Common myeloid progenitor, CD34-positive (primary cell): ENCODE measurements at regions of chr19 and their contacts with region 1.

Region 1: DNA sequence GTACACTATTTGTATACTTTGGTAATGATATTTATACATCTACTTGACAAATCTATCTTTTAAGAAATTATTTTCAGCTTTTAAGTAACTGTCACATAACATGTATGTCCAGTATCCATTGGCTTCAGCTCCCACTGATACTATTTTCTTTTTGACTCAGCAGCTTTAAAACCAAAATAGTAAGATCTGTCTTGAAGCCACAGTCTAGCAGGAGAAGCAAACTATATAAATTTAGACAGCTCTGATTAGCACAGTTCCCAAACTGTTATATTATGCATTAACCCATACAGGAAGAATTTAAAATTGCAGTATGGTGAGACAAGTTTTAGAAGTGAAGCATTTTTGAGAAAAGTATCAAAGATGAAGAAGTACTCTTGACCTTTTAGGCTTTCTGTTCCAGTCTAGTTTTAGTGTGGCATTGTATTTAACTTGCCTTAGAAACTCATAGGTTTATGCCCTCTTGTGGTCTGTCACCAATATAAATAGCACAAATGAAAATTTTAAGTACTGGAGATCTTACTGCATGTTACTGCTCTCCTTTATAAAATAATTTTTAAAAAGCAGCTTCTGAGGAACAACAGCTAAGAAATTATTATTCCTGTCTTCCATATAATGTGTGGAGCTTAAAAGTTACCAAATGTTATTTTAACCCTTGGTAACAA is 24.7 kb downstream of the URI1 start:
- DNase-seq: peak; percentile 52 to 72 (median 65)
- H3K4me3 ChIP-seq: no peak overlapping the region
- H3K27ac ChIP-seq: peak overlapping the region; percentile 10 to 67
- H3K4me1 ChIP-seq: peaks cover 10 to 45% (median 26%) of the 10 kb centered on the region in 4 experiments
- H3K27me3 ChIP-seq: no peaks in the 10 kb centered on the region

Region 2: GRCh38 chr19:29978080-29978479 is 11.4 kb after region 1 on chr19:
- CTCF ChIA-PET with region 1: interaction called, 14 read pairs
- POLR2A ChIA-PET with region 1: no interaction called
- DNase-seq: peak; percentile 14 to 45 (median 28)
- H3K4me3 ChIP-seq: peak overlapping the region in 5 of 7 experiments; percentile 19 to 73 (median 45)
- H3K27ac ChIP-seq: peak overlapping the region; percentile 33 to 76
- H3K4me1 ChIP-seq: peaks cover 4 to 20% (median 12%) of the 10 kb centered on the region in 4 experiments
- H3K27me3 ChIP-seq: no peaks in the 10 kb centered on the region

Region 3: DNA sequence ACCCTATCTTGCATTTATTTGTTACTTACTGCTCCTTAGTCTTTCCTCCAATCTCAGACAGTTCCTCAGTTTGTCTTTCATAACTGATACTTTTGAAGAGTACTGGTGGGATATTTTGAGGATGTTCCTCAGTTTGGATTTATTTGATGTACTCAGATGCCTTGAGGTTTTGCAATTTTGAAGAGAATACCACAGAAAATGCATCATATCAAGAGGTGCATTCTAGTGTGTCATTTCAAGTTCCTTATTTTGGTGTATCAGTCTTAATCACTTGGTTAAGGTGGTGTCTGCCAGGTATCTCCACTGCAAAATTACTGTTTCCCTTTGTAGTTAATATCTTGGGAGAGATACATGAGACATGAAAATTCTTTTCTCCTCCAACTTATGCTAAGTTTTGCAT is 50.5 kb after region 1 on chr19:
- CTCF ChIA-PET with region 1: no interaction called
- POLR2A ChIA-PET with region 1: no interaction called
- DNase-seq: no peak
- H3K4me3 ChIP-seq: no peak overlapping the region
- H3K27ac ChIP-seq: no peak overlapping the region
- H3K4me1 ChIP-seq: no peaks in the 10 kb centered on the region
- H3K27me3 ChIP-seq: no peaks in the 10 kb centered on the region

Region 4: GRCh38 chr19:30269638-30270037 is 302.9 kb after region 1 on chr19:
- CTCF ChIA-PET with region 1: no interaction called
- POLR2A ChIA-PET with region 1: no interaction called
- DNase-seq: no peak
- H3K4me3 ChIP-seq: no peak overlapping the region
- H3K27ac ChIP-seq: no peak overlapping the region
- H3K4me1 ChIP-seq: no peaks in the 10 kb centered on the region
- H3K27me3 ChIP-seq: peaks cover 2 to 51% (median 11%) of the 10 kb centered on the region in 5 experiments